Posterior vena cava (tissue), 2 donors: ENCODE measurements at regions of chr20 and their contacts with region 1.

Region 1: GRCh38 chr20:57672159-57672558 is 37.7 kb downstream of the PMEPA1 start:
- DNase-seq: peak; percentile 89

Region 2: GRCh38 chr20:56735191-56735711 is 936.9 kb before region 1 on chr20:
- intact Hi-C with region 1: loop called in 1 of 2 experiments (anchors 5 kb)
- DNase-seq: no peak